ENCODE measurements at regions of chr16 and their contacts with region 1.

Region 1: DNA sequence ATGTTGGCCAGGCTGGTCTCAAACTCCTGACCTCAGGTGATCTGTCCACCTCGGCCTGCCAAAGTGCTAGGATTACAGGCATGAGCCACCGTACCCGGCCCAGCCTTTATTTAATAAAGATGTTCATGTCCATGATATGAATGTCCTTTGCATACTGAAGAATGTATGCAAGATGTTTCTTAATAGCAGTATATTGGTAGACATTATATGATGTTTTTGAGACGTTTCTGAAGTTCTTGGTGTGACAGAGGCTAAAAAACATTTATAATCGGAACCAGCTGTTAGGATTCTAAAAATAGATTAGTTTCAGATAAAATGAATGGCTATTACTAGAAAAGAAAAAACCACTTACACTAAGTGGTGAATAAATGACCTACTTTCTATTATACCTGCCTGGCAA is 11.8 kb downstream of the PDZD9 start:
- DNase-seq: no peak
- H3K4me3 ChIP-seq: no peak overlapping the region
- H3K4me3 Mint-ChIP-seq: no peak overlapping the region
- H3K27ac ChIP-seq: no peak overlapping the region
- H3K27ac Mint-ChIP-seq: peak overlapping the region in 1 of 7 donors; percentile 62
- H3K4me1 ChIP-seq: peaks cover 24% of the 10 kb centered on the region
- H3K4me1 Mint-ChIP-seq: peaks cover 19 to 39% (median 27%) of the 10 kb centered on the region in 4 donors
- H3K27me3 ChIP-seq: no peaks in the 10 kb centered on the region
- H3K27me3 Mint-ChIP-seq: no peaks in the 10 kb centered on the region

Region 2: GRCh38 chr16:22001591-22001990 is 12.5 kb after region 1 on chr16:
- CTCF ChIA-PET with region 1: interaction called, 37 read pairs
- POLR2A ChIA-PET with region 1: interaction called, 3 read pairs
- intact Hi-C with region 1: no loop called
- DNase-seq: no peak
- H3K4me3 ChIP-seq: no peak overlapping the region
- H3K4me3 Mint-ChIP-seq: no peak overlapping the region
- H3K27ac ChIP-seq: no peak overlapping the region
- H3K27ac Mint-ChIP-seq: no peak overlapping the region
- H3K4me1 ChIP-seq: peaks cover 9% of the 10 kb centered on the region
- H3K4me1 Mint-ChIP-seq: peaks cover 4 to 18% (median 13%) of the 10 kb centered on the region in 4 donors
- H3K27me3 ChIP-seq: no peaks in the 10 kb centered on the region
- H3K27me3 Mint-ChIP-seq: no peaks in the 10 kb centered on the region

Region 3: GRCh38 chr16:23088018-23088417 is 1098.9 kb after region 1 on chr16:
- CTCF ChIA-PET with region 1: no interaction called
- POLR2A ChIA-PET with region 1: no interaction called
- intact Hi-C with region 1: no loop called
- DNase-seq: no peak
- H3K4me3 ChIP-seq: no peak overlapping the region
- H3K4me3 Mint-ChIP-seq: no peak overlapping the region
- H3K27ac ChIP-seq: no peak overlapping the region
- H3K27ac Mint-ChIP-seq: peak overlapping the region in 2 of 7 donors; percentile 2 to 3
- H3K4me1 ChIP-seq: no peaks in the 10 kb centered on the region
- H3K4me1 Mint-ChIP-seq: peaks cover 0 to 1% (median under 1%) of the 10 kb centered on the region in 4 donors
- H3K27me3 ChIP-seq: no peaks in the 10 kb centered on the region
- H3K27me3 Mint-ChIP-seq: no peaks in the 10 kb centered on the region